ENCODE measurements at regions of chr3 and their contacts with region 1.

Region 1: DNA sequence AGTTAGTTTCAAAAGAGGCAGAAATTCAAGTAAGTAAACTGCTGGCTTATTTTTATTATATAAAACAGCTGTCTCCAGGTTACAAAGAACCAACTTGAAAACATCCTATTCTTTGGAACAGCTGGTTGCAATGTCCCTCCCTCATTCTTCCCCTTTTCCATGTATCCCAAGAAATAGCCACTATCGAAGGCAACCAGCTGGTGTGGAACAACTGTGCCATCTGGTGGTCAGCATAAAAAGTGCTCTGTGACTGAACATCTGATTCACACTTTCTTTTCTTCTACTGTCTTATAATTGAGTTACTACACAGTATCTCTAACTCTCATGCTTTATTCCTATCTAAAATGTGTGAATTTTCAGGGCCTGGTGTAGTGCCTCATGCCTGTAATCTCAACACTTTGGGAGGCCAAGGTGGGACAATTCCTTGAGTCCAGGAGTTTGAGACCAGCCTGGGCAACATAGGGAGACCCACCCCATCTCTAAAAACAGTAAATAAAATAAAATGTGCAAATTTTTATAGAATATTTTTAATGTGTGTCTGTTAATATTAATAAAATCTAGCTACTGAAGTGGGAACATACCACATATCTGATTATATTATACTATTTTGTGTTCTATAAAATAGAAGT is 9.6 kb downstream of the OSBPL11 start:
- DNase-seq: peak; percentile 64
- H3K4me3 Mint-ChIP-seq: no peak overlapping the region
- H3K27ac Mint-ChIP-seq: no peak overlapping the region
- H3K4me1 Mint-ChIP-seq: peaks cover 20% of the 10 kb centered on the region
- H3K27me3 Mint-ChIP-seq: no peaks in the 10 kb centered on the region
- CTCF ChIP-seq: peak; percentile 83

Region 2: DNA sequence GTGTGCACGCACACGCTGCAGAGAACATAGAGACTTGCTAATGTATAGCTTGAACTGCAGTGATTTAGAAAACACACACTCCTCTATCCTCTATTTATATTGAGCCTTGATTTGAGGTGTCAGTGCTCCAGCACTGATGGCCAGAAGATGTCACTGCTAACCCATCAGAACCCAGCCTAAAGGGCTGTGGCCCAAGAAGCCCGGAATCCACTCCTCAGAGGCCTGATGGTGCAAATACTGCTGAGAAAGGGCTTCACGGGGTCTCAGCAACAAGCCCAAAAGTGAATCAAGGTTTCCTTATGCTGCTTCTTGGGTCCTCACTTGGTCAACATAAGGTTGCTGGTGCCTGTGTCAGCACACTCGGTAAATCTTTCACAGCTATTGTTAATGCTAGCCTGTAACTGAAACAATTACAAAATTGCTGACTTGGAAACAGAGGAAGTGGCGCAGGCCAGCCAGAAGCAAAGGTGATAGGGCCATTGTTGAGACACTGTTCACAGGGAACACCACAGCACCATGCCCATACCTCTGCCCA is 590.2 kb before region 1 on chr3:
- CTCF ChIA-PET with region 1: interaction called, 5 read pairs
- intact Hi-C with region 1: loop called (anchors 2 kb)
- DNase-seq: peak; percentile 61
- H3K4me3 Mint-ChIP-seq: no peak overlapping the region
- H3K27ac Mint-ChIP-seq: no peak overlapping the region
- H3K4me1 Mint-ChIP-seq: no peaks in the 10 kb centered on the region
- H3K27me3 Mint-ChIP-seq: peaks cover 10% of the 10 kb centered on the region
- CTCF ChIP-seq: peak; percentile 55

Region 3: DNA sequence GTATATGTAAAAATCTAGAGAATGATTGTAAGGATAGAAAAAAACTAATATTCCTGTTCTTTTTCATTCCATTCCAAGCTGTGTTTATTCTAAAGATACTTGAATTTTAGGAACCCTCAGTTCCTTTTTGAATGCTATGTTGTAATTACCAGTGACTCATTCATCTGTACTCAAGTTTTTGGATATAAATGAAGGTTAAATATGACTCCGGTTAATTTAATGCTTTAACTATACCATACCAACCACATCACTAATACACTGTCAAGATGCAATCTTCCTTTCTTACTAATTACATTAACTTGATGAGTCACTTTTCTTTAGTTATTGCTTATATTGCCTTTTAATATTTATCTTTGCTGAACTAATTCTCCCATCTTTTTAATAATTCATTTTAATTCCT is 141.8 kb before region 1 on chr3:
- CTCF ChIA-PET with region 1: no interaction called
- intact Hi-C with region 1: loop called (anchors 10 kb)
- DNase-seq: no peak
- H3K4me3 Mint-ChIP-seq: no peak overlapping the region
- H3K27ac Mint-ChIP-seq: no peak overlapping the region
- H3K4me1 Mint-ChIP-seq: no peaks in the 10 kb centered on the region
- H3K27me3 Mint-ChIP-seq: no peaks in the 10 kb centered on the region
- CTCF ChIP-seq: no peak

Region 4: GRCh38 chr3:125684199-125684598 is 98.5 kb after region 1 on chr3:
- CTCF ChIA-PET with region 1: no interaction called
- intact Hi-C with region 1: no loop called
- DNase-seq: no peak
- H3K4me3 Mint-ChIP-seq: no peak overlapping the region
- H3K27ac Mint-ChIP-seq: no peak overlapping the region
- H3K4me1 Mint-ChIP-seq: no peaks in the 10 kb centered on the region
- H3K27me3 Mint-ChIP-seq: no peaks in the 10 kb centered on the region
- CTCF ChIP-seq: peak; percentile 14